Caco-2 (cell line): ENCODE measurements at regions of chr2 and their contacts with region 1.

Region 1: DNA sequence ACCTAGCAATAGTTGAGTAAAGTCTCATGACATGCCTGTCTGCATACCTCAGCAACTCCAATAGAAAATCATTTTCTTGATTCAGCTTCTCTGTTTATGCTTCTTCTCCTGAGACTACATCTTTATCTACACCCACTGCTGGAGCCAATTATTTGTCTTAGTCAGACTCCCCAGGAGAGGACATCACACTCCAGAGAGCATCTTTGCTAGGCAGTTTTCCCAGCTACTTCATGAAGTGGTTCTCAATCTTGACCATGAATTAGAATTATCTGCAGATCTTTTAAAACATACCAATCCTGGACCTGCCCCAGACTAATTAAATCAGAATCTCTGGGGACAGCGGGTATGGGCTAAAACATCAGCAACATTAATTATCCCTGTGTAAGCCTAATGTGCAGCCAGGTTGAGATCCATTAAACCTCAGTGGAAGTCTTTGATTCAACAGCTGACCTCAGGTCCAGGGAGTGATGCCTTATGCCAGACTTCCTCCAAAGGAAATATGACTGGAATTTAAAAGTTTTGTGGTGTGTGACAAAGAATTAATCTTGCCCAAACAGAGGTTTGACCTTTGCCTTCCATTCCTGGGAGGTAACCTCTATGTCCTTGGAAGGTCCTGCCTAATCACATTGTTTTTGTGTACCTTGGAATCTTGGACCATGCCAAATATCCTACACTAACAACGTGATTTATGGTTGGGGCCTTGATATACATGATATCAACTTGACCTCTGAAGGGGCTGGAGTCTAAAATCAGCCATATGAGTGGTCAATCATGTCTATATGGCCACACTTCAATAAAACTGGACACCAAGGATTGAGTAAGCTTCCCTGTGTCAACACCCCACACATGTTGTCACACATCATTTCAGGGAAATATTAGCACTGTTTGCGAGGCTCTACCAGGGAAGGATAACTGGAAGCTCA is 99.3 kb upstream of the DNAJC10 start:
- DNase-seq: peak; percentile 50 to 65
- H3K4me3 ChIP-seq: no peak overlapping the region
- H3K4me3 Mint-ChIP-seq: no peak overlapping the region
- H3K27ac Mint-ChIP-seq: peak overlapping the region; percentile 1
- H3K4me1 ChIP-seq: peaks cover 20% of the 10 kb centered on the region
- H3K4me1 Mint-ChIP-seq: peaks cover 15% of the 10 kb centered on the region
- H3K27me3 ChIP-seq: no peaks in the 10 kb centered on the region; the same call in 1 of the 2 replicates
- H3K27me3 Mint-ChIP-seq: no peaks in the 10 kb centered on the region
- CTCF ChIP-seq: no peak

Region 2: DNA sequence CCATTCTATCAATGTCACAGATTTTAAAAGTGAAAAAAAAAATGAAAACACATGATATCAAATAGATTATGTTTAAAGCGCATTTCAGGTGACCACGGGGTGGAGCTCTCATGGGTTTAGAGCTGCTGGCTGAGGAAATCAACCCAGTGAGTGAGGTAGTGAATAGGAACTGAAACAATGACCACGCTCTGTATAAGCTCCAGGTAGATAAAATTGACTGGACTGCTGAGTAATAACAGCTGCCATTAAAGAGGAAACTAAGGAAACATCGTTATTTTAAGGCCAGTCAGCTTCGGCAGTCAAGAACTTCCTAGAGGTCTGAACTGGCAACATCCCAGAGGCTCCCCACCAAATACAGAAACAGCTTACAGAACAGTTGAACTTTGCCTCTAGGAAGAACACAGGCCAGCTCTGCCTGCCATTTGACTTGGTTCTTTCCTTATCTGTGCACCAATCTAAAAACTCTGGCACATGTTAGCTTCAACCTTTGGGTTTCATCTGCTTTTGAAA is 375.8 kb before region 1 on chr2:
- CTCF ChIA-PET with region 1: no interaction called
- POLR2A ChIA-PET with region 1: no interaction called
- intact Hi-C with region 1: no loop called
- DNase-seq: peak; percentile 43 to 46
- H3K4me3 ChIP-seq: no peak overlapping the region
- H3K4me3 Mint-ChIP-seq: no peak overlapping the region
- H3K27ac Mint-ChIP-seq: no peak overlapping the region
- H3K4me1 ChIP-seq: no peaks in the 10 kb centered on the region
- H3K4me1 Mint-ChIP-seq: no peaks in the 10 kb centered on the region
- H3K27me3 ChIP-seq: no peaks in the 10 kb centered on the region
- H3K27me3 Mint-ChIP-seq: no peaks in the 10 kb centered on the region
- CTCF ChIP-seq: peak; percentile 44 to 54

Region 3: DNA sequence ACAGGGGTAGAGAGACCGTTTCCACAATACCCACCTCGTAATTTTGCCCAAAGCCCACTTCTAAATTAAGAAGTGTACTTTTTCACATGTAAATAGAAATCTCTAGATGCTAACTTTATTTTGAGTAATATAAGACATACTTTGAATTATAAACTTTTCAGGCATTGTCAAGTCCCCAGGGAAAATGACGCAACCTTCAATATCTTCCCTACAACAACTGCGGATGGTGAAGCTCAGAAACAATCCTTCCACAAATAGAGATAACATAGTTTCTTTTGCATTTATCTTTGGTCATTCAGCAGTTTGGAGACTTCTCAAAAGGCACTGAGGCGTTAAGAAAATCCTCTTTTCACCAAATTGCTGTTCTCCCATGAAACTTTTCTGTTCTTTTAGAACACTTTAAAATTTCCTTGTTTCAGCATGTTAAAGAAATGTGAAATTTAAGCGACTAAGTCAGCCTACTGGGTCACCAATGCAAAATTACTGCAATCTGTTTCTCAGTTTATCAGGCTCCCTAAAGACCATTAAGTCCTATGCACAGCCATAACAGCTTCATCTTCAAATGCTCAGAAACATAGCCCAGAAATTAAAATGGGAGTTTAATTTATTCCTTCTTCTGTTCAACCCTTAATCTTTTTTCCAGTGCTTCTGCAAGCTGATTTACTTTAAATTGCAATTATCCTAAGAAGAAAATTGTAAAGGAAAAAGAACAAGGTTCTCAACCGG is 19.0 kb before region 1 on chr2:
- CTCF ChIA-PET with region 1: no interaction called
- POLR2A ChIA-PET with region 1: no interaction called
- intact Hi-C with region 1: loop called (anchors 1 kb)
- DNase-seq: no peak
- H3K4me3 ChIP-seq: no peak overlapping the region
- H3K4me3 Mint-ChIP-seq: no peak overlapping the region
- H3K27ac Mint-ChIP-seq: no peak overlapping the region
- H3K4me1 ChIP-seq: peaks cover 5% of the 10 kb centered on the region
- H3K4me1 Mint-ChIP-seq: peaks cover 12% of the 10 kb centered on the region
- H3K27me3 ChIP-seq: no peaks in the 10 kb centered on the region
- H3K27me3 Mint-ChIP-seq: peaks cover 3% of the 10 kb centered on the region
- CTCF ChIP-seq: no peak

Region 4: GRCh38 chr2:182642328-182642727 is 25.6 kb after region 1 on chr2:
- CTCF ChIA-PET with region 1: no interaction called
- POLR2A ChIA-PET with region 1: no interaction called
- intact Hi-C with region 1: no loop called
- DNase-seq: peak; percentile 72 to 74
- H3K4me3 ChIP-seq: no peak overlapping the region
- H3K4me3 Mint-ChIP-seq: no peak overlapping the region
- H3K27ac Mint-ChIP-seq: no peak overlapping the region
- H3K4me1 ChIP-seq: no peaks in the 10 kb centered on the region
- H3K4me1 Mint-ChIP-seq: no peaks in the 10 kb centered on the region
- H3K27me3 ChIP-seq: no peaks in the 10 kb centered on the region
- H3K27me3 Mint-ChIP-seq: peaks cover 3% of the 10 kb centered on the region
- CTCF ChIP-seq: no peak

Region 5: GRCh38 chr2:182715896-182716668 is 99.3 kb after region 1 on chr2 and contains the start of gene DNAJC10:
- CTCF ChIA-PET with region 1: no interaction called
- POLR2A ChIA-PET with region 1: no interaction called
- intact Hi-C with region 1: loop called (anchors 1 kb)
- DNase-seq: peak; percentile 88 to 94
- H3K4me3 ChIP-seq: peak within 1 kb of the TSS; percentile 62
- H3K4me3 Mint-ChIP-seq: no peak within 1 kb of the TSS
- H3K27ac Mint-ChIP-seq: no peak within 1 kb of the TSS
- H3K4me1 ChIP-seq: peaks cover 13% of the 10 kb centered on the region; the same call in 1 of the 2 replicates
- H3K4me1 Mint-ChIP-seq: peaks cover 14% of the 10 kb centered on the region
- H3K27me3 ChIP-seq: no peaks in the 10 kb centered on the region
- H3K27me3 Mint-ChIP-seq: peaks cover 3% of the 10 kb centered on the region
- CTCF ChIP-seq: no peak
- total RNA-seq, gene DNAJC10: 103 and 109 TPM in 2 replicates